Activated CD4-positive, alpha-beta T cell treated with anti-CD3 and anti-CD28 coated beads, Interleukin-2, amount 10 ng/mL, durations not matched to agents 24 days and 14 days (primary cell): ENCODE measurements at regions of chr9 and their contacts with region 1.

Region 1: DNA sequence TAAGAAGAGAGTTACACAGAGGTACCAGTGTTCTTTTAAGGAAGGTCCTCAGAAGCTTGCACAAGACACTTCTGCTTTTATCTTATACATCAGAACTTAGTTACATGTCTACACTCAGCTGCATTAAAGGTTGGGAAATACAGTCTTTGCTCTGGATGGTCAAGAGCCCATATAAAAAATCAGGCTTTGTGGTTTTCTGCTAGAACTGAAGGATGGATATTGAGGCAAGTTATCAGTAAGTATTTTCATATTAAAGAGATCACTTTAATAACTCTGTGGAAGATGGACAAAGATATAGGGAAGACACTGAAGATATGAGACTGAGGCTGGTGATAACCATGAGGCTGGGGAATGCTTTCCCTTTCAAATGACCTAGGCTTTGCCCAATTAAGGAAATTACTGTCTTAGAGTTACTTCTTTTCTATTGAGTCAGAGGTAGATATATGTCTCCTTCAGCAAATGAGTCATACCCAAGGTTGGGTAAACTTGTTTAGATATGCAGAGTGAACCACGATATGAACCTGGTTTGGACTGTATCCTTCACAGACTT is 87.0 kb upstream of the TNC start:
- DNase-seq: no peak
- H3K4me3 Mint-ChIP-seq: no peak overlapping the region
- H3K27ac Mint-ChIP-seq: peak overlapping the region; percentile 51
- H3K4me1 Mint-ChIP-seq: peaks cover 37% of the 10 kb centered on the region
- H3K27me3 Mint-ChIP-seq: peaks cover 14% of the 10 kb centered on the region

Region 2: DNA sequence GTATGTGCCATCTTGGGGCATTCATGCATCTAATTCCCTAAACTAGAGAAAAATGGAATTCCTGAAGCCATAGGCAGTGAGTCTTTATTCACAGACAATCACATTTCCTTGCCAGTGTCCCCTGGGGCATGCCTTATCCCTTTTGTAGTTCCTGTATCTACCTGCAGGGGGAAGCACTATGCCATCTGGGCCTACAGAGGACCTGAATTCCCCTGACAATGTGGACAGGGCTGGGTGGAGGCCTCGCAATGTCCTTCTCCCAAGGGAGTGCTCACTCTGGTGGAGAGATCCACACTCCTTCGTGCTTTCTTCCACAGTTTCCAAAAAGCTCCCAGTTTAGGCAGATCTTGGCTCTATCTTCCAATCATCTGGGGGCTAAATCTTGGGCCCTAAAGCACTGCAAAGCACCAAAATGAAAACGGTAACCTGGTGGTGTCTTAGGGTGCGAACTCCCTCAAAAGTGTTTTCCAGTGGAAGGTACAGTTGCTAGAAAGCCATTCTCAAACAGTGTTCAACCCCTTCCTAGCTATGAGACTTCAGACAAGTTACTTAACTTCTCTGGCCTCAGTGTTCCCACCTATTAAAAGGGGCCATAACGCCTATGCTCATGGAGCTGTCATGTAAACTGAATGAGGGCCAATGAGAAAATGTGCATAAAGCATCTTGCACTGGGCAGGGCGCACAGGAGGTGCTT is 717.2 kb before region 1 on chr9:
- intact Hi-C with region 1: loop called (anchors 5 kb)
- DNase-seq: peak; percentile 92
- H3K4me3 Mint-ChIP-seq: no peak overlapping the region
- H3K27ac Mint-ChIP-seq: peak overlapping the region; percentile 12
- H3K4me1 Mint-ChIP-seq: peaks cover 32% of the 10 kb centered on the region
- H3K27me3 Mint-ChIP-seq: peaks cover 8% of the 10 kb centered on the region

Region 3: DNA sequence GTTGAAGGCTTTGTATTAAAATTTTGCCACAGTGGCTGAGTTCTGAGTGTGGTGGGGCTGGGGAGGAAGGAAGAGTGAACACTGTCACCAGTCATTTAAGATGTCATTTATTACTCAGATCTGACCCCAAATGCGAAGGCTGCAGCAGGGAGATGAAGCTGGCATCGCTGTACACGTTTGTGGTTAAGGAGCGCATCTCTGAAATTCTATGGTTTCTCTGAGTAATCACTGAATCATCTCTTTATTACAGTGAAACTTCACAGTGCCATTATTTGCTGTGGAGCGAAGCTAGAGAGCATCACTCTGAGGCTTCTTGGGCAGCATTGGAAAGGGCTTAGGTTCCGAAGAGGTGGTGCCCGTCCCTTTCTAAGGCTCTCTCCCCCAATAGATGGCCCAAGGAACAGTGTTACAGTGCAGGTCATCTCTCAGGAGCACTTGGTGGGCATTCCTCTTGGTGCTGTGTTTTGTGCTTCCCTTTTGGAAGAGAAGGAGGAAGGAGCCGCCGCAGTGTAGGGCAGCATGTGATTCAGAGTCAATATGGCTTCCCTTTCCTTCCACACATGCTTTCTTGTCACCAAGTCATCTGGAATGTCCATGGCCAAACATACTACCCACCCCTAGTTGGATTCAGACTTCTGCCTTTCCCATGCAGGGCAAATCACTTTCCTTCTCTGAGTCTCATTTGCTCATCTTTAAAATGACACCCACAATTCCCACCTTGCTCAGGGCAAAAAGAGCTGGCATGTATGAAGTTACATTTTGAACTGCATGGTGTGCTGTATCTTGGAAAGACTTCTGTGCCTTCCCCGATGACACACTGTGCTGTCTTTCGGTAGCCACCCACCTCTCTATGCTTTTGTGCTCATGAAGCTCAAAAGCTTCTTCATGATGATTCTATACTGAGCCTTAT is 513.7 kb before region 1 on chr9:
- intact Hi-C with region 1: loop called (anchors 2 kb)
- DNase-seq: peak; percentile 93
- H3K4me3 Mint-ChIP-seq: peak overlapping the region; percentile 59
- H3K27ac Mint-ChIP-seq: peak overlapping the region; percentile 97
- H3K4me1 Mint-ChIP-seq: peaks cover 80% of the 10 kb centered on the region
- H3K27me3 Mint-ChIP-seq: no peaks in the 10 kb centered on the region

Region 4: DNA sequence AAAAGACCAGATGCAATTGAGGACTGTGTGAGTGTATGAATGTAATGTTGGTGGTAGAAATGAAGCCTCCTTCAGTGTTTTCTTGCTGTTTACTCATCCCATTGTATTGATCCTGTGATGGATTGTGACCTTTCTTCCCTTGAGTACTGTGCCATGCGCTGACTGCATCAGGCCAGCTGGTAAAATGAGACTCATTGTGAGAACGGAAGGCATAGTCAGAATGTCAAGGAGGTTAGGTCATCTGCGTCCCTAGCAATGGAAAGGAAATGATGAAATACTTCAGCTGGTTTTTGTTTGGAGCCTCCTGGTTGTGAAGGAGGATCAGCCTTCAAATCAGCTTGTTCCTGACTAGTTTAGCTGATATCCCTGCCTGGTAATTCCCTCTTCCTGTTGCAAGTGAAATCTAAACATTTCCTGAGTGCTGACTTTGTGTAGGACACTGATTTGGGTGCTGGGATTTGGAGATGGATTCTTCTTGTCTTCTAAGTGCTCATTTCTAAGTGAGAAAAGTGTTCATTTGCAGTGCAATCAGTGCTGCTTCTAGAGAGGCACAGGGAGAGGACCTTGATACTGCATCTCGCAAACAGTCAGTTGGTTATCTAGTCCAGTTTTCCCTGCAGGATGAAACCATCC is 310.1 kb before region 1 on chr9:
- intact Hi-C with region 1: loop called (anchors 1 kb)
- DNase-seq: peak; percentile 83
- H3K4me3 Mint-ChIP-seq: peak overlapping the region; percentile 32
- H3K27ac Mint-ChIP-seq: peak overlapping the region; percentile 89
- H3K4me1 Mint-ChIP-seq: peaks cover 48% of the 10 kb centered on the region
- H3K27me3 Mint-ChIP-seq: no peaks in the 10 kb centered on the region

Region 5: GRCh38 chr9:115035841-115036612 is 169.0 kb before region 1 on chr9:
- intact Hi-C with region 1: loop called (anchors 2 kb)
- DNase-seq: peak; percentile 67
- H3K4me3 Mint-ChIP-seq: peak overlapping the region; percentile 60
- H3K27ac Mint-ChIP-seq: peak overlapping the region; percentile 88
- H3K4me1 Mint-ChIP-seq: peaks cover 23% of the 10 kb centered on the region
- H3K27me3 Mint-ChIP-seq: peaks cover 2% of the 10 kb centered on the region

Region 6: GRCh38 chr9:115042781-115043509 is 162.0 kb before region 1 on chr9:
- intact Hi-C with region 1: loop called (anchors 1 kb)
- DNase-seq: peak; percentile 64
- H3K4me3 Mint-ChIP-seq: peak overlapping the region; percentile 50
- H3K27ac Mint-ChIP-seq: peak overlapping the region; percentile 89
- H3K4me1 Mint-ChIP-seq: peaks cover 23% of the 10 kb centered on the region
- H3K27me3 Mint-ChIP-seq: peaks cover 19% of the 10 kb centered on the region

Region 7: GRCh38 chr9:115142517-115143270 is 62.3 kb before region 1 on chr9:
- intact Hi-C with region 1: loop called (anchors 5 kb)
- DNase-seq: no peak
- H3K4me3 Mint-ChIP-seq: peak overlapping the region; percentile 33
- H3K27ac Mint-ChIP-seq: peak overlapping the region; percentile 27
- H3K4me1 Mint-ChIP-seq: peaks cover 34% of the 10 kb centered on the region
- H3K27me3 Mint-ChIP-seq: peaks cover 12% of the 10 kb centered on the region